ENCODE measurements at regions of chr2 and their contacts with region 1.

Region 1: GRCh38 chr2:106886916-106887758 is 1.2 kb upstream of the ST6GAL2 start:
- DNase-seq: peak in 1 of 2 donors; percentile 78
- H3K4me3 ChIP-seq: peak overlapping the region; percentile 80 to 98
- H3K27ac ChIP-seq: peak overlapping the region; percentile 93 to 97
- H3K4me1 ChIP-seq: peaks cover 0 to 3% of the 10 kb centered on the region in 2 donors
- H3K27me3 ChIP-seq: no peaks in the 10 kb centered on the region
- CTCF ChIP-seq: no peak

Region 2: DNA sequence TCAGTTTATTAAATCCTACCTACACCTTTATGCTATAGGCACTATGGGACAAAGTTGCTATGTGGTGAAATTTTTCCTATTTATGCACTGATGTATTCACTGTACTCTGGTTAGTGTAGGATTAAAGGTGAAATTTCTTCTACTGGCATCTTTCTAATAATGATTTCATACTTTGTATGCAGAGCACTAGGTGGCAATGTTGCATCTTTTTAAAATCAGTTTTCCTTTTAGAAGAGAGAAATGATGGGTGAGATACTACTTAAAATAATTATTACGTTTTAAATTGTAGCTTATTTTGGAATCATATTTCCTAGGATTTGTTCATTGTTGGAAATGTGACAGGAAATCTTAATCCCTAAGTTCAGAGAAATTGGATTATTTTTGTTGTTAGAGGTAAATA is 249.1 kb before region 1 on chr2:
- intact Hi-C with region 1: loop called (anchors 5 kb)
- DNase-seq: no peak
- H3K4me3 ChIP-seq: no peak overlapping the region
- H3K27ac ChIP-seq: no peak overlapping the region
- H3K4me1 ChIP-seq: peaks cover 0 to 5% of the 10 kb centered on the region in 2 donors
- H3K27me3 ChIP-seq: no peaks in the 10 kb centered on the region
- CTCF ChIP-seq: peak; percentile 29 to 55 (median 42)

Region 3: DNA sequence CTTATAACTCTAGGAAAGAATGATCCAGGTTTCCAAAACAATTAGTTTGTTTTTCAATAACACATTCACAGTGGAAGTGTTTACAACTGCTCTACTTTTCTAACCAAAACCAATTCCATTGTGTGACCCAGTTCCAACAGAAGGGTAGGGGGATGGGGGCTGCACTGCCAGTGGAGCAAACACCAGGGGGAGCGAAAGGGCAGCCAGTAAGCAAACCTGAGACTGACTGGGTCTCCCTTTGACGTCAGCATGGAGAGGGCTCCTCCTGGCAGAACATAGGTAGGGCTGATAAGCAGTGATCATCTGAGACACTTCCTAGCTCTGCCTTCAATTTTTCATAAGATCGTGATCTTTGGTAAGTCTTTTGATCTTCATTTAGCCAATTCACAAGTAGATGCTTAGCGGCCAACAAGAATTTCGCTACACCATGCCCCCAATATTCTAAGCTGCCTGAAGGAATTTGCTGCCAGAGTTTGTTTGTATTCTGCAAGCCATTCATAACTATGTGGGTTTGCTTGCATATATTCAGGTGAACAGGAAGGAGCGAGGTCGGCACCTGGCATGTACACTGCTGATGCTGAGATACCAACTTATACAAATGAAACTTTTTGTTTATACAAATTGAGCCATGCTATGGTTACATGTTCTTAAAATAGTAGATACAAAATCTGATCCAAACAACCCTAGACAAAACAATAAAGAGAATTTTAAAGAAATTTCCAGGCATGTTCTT is 47.1 kb before region 1 on chr2:
- intact Hi-C with region 1: loop called (anchors 2 kb)
- DNase-seq: no peak
- H3K4me3 ChIP-seq: no peak overlapping the region
- H3K27ac ChIP-seq: peak overlapping the region; percentile 75 to 78
- H3K4me1 ChIP-seq: peaks cover 23 to 41% of the 10 kb centered on the region in 2 donors
- H3K27me3 ChIP-seq: no peaks in the 10 kb centered on the region
- CTCF ChIP-seq: peak in 2 of 3 experiments; percentile 20 to 55

Region 4: GRCh38 chr2:106868275-106868674 is 18.9 kb before region 1 on chr2:
- intact Hi-C with region 1: loop called (anchors 2 kb)
- DNase-seq: no peak
- H3K4me3 ChIP-seq: peak overlapping the region; percentile 32 to 51
- H3K27ac ChIP-seq: peak overlapping the region; percentile 80 to 84
- H3K4me1 ChIP-seq: peaks cover 3 to 22% of the 10 kb centered on the region in 2 donors
- H3K27me3 ChIP-seq: no peaks in the 10 kb centered on the region
- CTCF ChIP-seq: peak; percentile 4 to 46 (median 36)

Region 5: GRCh38 chr2:107337209-107337898 is 450.2 kb after region 1 on chr2:
- intact Hi-C with region 1: loop called (anchors 5 kb)
- DNase-seq: peak in 1 of 2 donors; percentile 68
- H3K4me3 ChIP-seq: no peak overlapping the region
- H3K27ac ChIP-seq: peak overlapping the region; percentile 77
- H3K4me1 ChIP-seq: peaks cover 0 to 15% of the 10 kb centered on the region in 2 donors
- H3K27me3 ChIP-seq: no peaks in the 10 kb centered on the region
- CTCF ChIP-seq: no peak

Region 6: DNA sequence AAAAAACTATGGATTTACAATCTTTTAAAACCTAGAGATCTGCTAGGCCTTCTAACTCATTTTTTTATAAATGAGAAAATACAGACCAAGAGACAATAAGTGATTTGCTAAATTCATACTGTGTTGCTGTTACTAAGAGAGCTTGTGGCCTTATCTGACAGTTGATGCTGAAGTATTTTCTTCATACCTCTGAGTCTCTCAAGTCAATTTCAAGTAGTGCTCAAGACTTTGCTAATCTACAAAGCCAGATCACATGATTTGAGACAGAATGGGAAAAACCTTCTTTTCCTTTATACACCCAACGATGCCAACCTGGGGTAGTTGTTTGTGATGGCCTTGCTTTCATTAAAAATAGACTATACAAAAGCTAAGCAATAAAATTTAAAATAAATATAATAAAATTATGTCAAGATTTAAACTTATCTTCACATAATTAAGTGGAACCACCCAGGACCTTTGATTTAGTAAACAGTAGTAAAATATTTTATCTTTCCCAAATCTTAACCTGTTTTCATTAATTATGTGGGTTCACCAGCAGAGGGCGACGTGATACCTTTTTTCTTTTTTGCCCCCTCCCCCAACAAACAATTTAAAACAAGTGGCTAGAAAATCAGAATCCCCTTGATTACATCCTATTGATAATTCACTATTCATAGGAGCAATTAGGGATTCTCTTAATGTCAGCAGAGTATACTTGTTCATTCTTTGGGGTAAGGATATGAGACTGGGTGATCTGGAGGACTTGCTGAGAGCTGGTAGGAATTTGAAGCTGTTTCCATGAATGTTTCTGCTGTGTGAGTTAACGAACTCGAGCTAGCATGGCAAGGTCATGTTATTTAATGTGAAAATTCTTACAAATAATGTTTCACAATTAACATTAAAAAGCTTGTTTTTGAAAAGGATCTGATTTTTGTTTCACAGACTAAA is 1049.6 kb after region 1 on chr2:
- intact Hi-C with region 1: loop called (anchors 10 kb)
- DNase-seq: no peak
- H3K4me3 ChIP-seq: no peak overlapping the region
- H3K27ac ChIP-seq: no peak overlapping the region
- H3K4me1 ChIP-seq: no peaks in the 10 kb centered on the region
- H3K27me3 ChIP-seq: no peaks in the 10 kb centered on the region
- CTCF ChIP-seq: peak in 2 of 3 experiments; percentile 28 to 41